ENCODE measurements at regions of chr10 and their contacts with region 1.

Region 1: GRCh38 chr10:123559066-123559822 is 106.9 kb upstream of the GPR26 start:
- DNase-seq: peak; percentile 70
- H3K4me3 Mint-ChIP-seq: no peak overlapping the region
- H3K27ac Mint-ChIP-seq: no peak overlapping the region
- H3K4me1 Mint-ChIP-seq: no peaks in the 10 kb centered on the region
- H3K27me3 Mint-ChIP-seq: peaks cover 30% of the 10 kb centered on the region
- CTCF ChIP-seq: peak; percentile 84

Region 2: DNA sequence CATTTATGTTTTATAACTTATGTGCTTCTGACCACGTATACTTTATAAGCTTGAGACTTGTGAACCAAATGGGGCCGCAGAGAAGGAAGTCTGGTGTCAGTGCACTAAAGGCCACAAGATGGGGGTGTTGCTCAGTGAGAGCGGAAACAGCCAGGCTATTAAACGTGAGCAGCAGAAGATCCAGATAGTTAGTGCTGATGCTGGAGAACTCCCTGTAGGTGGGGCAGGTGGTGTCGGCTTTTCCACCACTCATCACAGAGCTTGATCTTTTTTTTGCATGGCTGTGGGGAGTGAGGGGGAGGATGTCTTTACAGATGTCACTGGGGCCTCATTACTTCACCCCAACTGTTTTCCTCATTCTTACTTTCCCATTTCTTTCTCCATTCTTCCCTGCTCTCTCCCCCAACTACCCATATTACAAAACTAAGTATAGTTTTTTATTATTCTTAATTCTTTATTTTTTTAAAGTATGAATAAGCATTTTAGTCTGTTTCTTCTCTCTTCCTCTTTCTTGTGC is 515.8 kb before region 1 on chr10:
- CTCF ChIA-PET with region 1: interaction called, 3 read pairs
- intact Hi-C with region 1: loop called (anchors 1 kb)
- DNase-seq: peak; percentile 51
- H3K4me3 Mint-ChIP-seq: no peak overlapping the region
- H3K27ac Mint-ChIP-seq: no peak overlapping the region
- H3K4me1 Mint-ChIP-seq: no peaks in the 10 kb centered on the region
- H3K27me3 Mint-ChIP-seq: no peaks in the 10 kb centered on the region
- CTCF ChIP-seq: peak; percentile 58

Region 3: GRCh38 chr10:123380497-123381085 is 178.7 kb before region 1 on chr10:
- CTCF ChIA-PET with region 1: no interaction called
- intact Hi-C with region 1: loop called (anchors 5 kb)
- DNase-seq: no peak
- H3K4me3 Mint-ChIP-seq: no peak overlapping the region
- H3K27ac Mint-ChIP-seq: no peak overlapping the region
- H3K4me1 Mint-ChIP-seq: no peaks in the 10 kb centered on the region
- H3K27me3 Mint-ChIP-seq: peaks cover 25% of the 10 kb centered on the region
- CTCF ChIP-seq: no peak

Region 4: DNA sequence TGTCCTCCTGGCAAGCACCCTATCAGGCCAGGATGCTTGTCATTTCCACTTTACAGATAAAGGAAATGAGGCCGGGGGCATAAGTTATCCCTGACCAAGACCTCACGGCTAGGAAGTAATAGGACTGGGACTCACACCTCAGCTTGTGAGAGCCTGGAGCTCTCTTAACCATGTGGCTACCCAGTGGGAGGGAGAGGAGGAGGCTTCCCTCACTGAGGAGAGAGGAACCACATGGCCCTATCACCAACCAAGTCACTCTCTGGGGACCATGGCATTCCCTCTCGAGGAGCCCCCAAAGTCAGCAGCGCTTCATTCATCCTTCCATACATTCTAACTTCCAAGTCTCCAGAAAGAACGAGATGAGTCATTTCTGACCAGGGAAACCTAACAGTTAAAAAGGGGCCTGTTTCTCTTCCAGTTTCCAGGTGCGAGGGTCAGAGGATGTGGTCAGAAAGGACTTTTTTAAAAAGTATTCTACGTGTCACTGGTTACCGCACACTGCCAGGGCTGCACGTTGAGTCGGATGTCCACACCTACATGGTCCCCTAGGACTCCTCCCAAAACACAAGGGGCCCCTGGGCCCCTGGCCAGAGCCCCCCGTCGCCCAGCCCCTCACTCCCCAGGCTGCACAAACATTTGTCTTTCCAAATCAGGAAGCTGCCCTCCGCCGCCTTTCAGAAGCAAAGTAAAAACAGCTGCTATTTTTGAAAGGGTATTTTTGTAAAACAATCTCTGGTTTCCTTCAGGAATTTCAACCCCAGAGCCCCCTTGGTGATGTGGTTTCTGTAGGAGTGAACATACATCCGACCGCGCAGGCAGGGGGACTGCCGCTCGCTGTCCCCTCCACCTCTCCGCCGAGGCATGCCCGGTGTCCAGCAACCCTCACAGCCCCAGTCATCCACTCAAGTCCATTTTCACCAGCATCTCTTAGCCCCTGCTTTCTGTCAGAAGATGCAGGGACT is 662.4 kb after region 1 on chr10:
- CTCF ChIA-PET with region 1: no interaction called
- intact Hi-C with region 1: no loop called
- DNase-seq: no peak
- H3K4me3 Mint-ChIP-seq: no peak overlapping the region
- H3K27ac Mint-ChIP-seq: no peak overlapping the region
- H3K4me1 Mint-ChIP-seq: no peaks in the 10 kb centered on the region
- H3K27me3 Mint-ChIP-seq: peaks cover 13% of the 10 kb centered on the region
- CTCF ChIP-seq: no peak

Measured in Calu3 (cell line).